Heart left ventricle (tissue), 16 donors: ENCODE measurements at regions of chr1 and their contacts with region 1.

Region 1: DNA sequence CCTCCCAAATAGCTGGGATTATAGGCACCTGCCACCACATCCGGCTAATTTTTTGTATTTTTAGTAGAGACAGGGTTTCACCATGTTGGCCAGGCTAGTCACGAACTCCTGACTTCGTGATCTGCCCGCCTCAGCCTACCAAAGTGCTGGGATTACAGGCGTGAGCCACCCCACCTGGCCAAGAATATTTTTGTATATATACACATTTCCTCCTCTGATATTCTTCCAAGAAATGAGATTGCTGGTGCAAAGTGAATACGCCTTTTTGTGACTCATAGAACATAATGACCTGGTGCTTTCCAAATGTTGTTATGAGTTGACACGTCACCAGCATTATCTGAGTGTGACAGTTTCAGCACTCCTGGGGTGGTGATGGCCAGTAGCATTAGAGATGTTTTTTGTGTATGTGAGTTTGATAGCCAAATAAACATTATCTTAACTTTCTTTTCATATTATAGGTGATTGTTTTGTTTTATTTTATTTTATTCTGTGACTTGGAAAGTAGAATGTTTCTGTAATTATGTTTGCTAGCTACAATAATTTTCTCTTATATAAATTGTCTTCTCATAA is 54.9 kb downstream of the KCNK1 start:
- DNase-seq: peak in 2 of 5 donors; percentile 17 to 34
- ATAC-seq: peak; percentile 64 to 86 (median 81)
- H3K4me3 ChIP-seq: no peak overlapping the region
- H3K27ac ChIP-seq: peak overlapping the region; percentile 5 to 82 (median 61)
- H3K4me1 ChIP-seq: peaks cover 0 to 42% (median 5%) of the 10 kb centered on the region in 12 donors
- H3K27me3 ChIP-seq: no peaks in the 10 kb centered on the region
- CTCF ChIP-seq: no peak
- POLR2A ChIP-seq: no peak

Region 2: DNA sequence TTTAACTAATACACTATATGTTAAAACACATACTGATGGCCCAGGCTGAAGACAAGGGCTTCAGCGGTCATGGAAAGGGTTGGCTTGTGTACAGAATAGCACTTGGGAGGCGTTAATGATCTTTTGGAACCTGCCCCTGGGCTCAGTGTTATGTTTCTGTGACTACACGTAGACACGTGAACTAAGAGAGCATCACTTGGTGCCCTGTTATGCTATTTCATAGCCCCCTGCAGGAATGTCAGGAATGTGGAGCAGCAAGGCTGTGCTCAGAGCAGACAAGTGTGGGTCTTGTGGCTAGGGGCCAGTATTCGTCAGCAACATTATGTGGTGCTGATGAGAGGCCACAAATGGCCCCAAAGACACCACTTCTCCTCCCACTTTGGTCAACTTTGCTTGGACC is 208.8 kb before region 1 on chr1:
- intact Hi-C with region 1: no loop called
- DNase-seq: no peak
- ATAC-seq: no peak
- H3K4me3 ChIP-seq: no peak overlapping the region
- H3K27ac ChIP-seq: no peak overlapping the region
- H3K4me1 ChIP-seq: no peaks in the 10 kb centered on the region
- H3K27me3 ChIP-seq: peaks cover 0 to 3% (median 0%) of the 10 kb centered on the region in 9 donors
- CTCF ChIP-seq: no peak
- POLR2A ChIP-seq: no peak

Region 3: DNA sequence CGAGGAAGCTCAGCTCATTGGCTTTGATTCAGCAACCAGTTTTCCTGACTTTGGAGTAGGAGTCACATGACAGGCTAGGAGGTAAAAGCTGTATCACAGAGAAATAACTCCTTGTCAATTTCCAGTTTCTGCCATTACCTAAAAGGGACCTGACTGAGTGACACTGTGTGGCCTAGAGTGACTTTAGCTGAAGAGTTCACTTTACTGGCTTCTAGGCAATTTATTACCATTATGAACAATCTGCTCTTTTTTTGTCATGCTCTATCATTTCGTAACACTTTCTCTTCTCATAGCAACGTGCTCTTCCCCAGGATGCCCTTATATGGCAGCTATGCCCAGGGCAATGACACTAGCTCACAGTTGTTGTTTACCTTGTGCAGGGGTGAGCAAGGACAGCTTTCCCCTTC is 52.3 kb after region 1 on chr1:
- intact Hi-C with region 1: loop called in 3 of 10 experiments (anchors 2 to 5 kb)
- DNase-seq: no peak
- ATAC-seq: peak in 2 of 4 donors; percentile 44 to 68
- H3K4me3 ChIP-seq: no peak overlapping the region
- H3K27ac ChIP-seq: peak overlapping the region in 11 of 12 donors; percentile 33 to 93 (median 80)
- H3K4me1 ChIP-seq: peaks cover 0 to 37% (median 5%) of the 10 kb centered on the region in 12 donors
- H3K27me3 ChIP-seq: no peaks in the 10 kb centered on the region
- CTCF ChIP-seq: no peak
- POLR2A ChIP-seq: no peak